Activated T-helper 2 cell treated with anti-CD3 and anti-CD28 coated beads, Interferon-gamma antibody, Interleukin-2, Interleukin-4, amounts not matched to agents 10 μg/mL and 5 μg/mL and 100 μg/mL, durations not matched to agents 14 hours and 24 hours and 36 hours (primary cell): ENCODE measurements at regions of chr1 and their contacts with region 1.

Region 1: GRCh38 chr1:201481761-201482493 is 12.9 kb upstream of the PHLDA3 start:
- DNase-seq: peak; percentile 72
- H3K4me3 Mint-ChIP-seq: peak overlapping the region; percentile 65
- H3K27ac Mint-ChIP-seq: no peak overlapping the region
- H3K4me1 Mint-ChIP-seq: peaks cover 22% of the 10 kb centered on the region
- H3K27me3 Mint-ChIP-seq: peaks cover 13% of the 10 kb centered on the region

Region 2: GRCh38 chr1:201433612-201434011 is 48.3 kb before region 1 on chr1:
- intact Hi-C with region 1: loop called (anchors 2 kb)
- DNase-seq: no peak
- H3K4me3 Mint-ChIP-seq: no peak overlapping the region
- H3K27ac Mint-ChIP-seq: no peak overlapping the region
- H3K4me1 Mint-ChIP-seq: peaks cover 5% of the 10 kb centered on the region
- H3K27me3 Mint-ChIP-seq: peaks cover 22% of the 10 kb centered on the region

Region 3: GRCh38 chr1:201447911-201448871 is 33.7 kb before region 1 on chr1:
- intact Hi-C with region 1: loop called (anchors 1 kb)
- DNase-seq: peak; percentile 45
- H3K4me3 Mint-ChIP-seq: no peak overlapping the region
- H3K27ac Mint-ChIP-seq: no peak overlapping the region
- H3K4me1 Mint-ChIP-seq: peaks cover 20% of the 10 kb centered on the region
- H3K27me3 Mint-ChIP-seq: peaks cover 7% of the 10 kb centered on the region

Region 4: DNA sequence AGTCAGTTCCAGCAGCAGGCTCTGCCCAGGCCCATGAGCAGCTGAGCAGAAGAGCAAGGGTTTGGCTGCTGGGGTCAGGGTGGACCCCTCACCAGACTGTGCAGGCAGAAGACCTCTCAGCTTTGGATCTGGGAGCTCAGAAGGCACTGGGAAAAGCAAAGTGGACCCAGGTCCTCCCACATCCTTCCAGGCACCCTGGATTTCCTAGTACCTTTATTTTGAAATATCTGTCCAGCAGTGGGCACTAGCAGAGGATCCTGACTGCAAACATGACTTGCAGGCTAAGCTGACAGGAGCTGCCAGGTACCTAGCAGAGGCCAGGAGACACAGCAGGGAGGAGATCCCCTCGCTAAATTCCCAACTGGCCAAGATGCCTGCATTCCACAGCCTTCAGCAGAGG is 26.2 kb before region 1 on chr1:
- intact Hi-C with region 1: loop called (anchors 2 kb)
- DNase-seq: no peak
- H3K4me3 Mint-ChIP-seq: no peak overlapping the region
- H3K27ac Mint-ChIP-seq: no peak overlapping the region
- H3K4me1 Mint-ChIP-seq: peaks cover 26% of the 10 kb centered on the region
- H3K27me3 Mint-ChIP-seq: peaks cover 18% of the 10 kb centered on the region

Region 5: DNA sequence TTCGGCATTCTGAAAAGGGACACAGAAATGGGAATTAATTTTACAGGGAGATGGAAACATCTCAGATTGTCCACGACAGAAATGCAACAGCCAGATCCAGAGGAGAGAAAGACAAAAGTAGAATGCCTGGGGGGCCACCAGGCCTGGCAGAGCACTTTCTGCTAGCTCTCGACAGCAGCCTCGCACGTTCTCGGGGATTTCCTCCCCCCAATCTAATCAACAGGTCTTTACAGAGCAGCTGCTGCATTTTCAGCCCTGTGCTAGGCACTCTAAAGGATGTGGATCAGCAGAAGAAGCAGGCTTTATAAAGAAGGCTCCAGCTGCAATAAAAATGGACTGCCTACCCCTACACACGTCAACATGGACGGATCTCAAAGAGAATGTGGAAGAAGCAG is 14.4 kb after region 1 on chr1:
- intact Hi-C with region 1: no loop called
- DNase-seq: no peak
- H3K4me3 Mint-ChIP-seq: no peak overlapping the region
- H3K27ac Mint-ChIP-seq: no peak overlapping the region
- H3K4me1 Mint-ChIP-seq: no peaks in the 10 kb centered on the region
- H3K27me3 Mint-ChIP-seq: no peaks in the 10 kb centered on the region

Region 6: DNA sequence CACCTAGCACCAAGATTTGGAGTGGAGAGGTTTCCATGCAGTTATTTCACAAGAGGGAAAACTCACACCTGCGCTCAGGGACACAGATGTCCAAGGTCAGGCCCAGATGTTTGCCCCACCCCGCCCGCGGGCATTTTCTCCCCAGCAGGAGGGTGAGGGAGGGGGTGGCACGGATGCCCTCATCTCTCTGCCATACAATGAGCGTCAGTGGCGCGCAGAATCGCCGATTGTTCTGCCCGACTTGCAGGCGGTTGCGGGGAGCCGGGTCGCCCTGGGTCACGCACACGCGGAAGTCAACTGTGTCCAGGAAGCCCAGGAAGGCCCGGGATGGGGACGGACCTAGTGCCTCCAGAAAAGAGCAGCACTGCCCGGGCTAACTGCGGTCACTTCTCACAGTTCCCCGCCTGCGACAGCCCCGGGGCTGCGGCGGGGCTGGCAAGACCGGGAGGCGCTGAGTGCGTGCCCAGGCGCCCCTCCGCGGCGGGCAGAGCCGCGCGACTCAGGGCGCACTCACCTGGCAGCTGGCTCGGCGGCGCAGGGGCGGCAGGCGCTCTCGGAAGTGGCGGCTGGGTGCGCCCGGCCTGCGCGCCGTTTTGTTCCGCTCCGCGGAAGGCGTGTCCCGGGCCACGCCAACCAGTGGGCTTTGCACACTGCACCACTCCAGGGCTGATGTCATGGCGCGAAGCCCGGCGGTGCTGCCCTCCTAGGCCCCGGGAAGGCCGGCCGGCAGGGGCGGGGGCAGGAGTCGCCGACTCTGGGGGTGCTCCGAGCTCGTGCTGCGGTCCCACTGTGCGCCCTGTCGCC is 24.8 kb after region 1 on chr1 and contains the start of gene CSRP1:
- intact Hi-C with region 1: loop called (anchors 1 kb)
- DNase-seq: peak; percentile 77
- H3K4me3 Mint-ChIP-seq: peak within 1 kb of the TSS; percentile 88
- H3K27ac Mint-ChIP-seq: peak within 1 kb of the TSS; percentile 86
- H3K4me1 Mint-ChIP-seq: peaks cover 29% of the 10 kb centered on the region
- H3K27me3 Mint-ChIP-seq: no peaks in the 10 kb centered on the region
- total RNA-seq, gene CSRP1: 61.4 and 62.9 TPM in 2 replicates

Region 7: GRCh38 chr1:201513498-201514243 is 31.7 kb after region 1 on chr1:
- intact Hi-C with region 1: loop called (anchors 1 kb)
- DNase-seq: no peak
- H3K4me3 Mint-ChIP-seq: no peak overlapping the region
- H3K27ac Mint-ChIP-seq: no peak overlapping the region
- H3K4me1 Mint-ChIP-seq: peaks cover 19% of the 10 kb centered on the region
- H3K27me3 Mint-ChIP-seq: no peaks in the 10 kb centered on the region